GM10248 (cell line): ENCODE measurements at regions of chr2 and their contacts with region 1.

Region 1: DNA sequence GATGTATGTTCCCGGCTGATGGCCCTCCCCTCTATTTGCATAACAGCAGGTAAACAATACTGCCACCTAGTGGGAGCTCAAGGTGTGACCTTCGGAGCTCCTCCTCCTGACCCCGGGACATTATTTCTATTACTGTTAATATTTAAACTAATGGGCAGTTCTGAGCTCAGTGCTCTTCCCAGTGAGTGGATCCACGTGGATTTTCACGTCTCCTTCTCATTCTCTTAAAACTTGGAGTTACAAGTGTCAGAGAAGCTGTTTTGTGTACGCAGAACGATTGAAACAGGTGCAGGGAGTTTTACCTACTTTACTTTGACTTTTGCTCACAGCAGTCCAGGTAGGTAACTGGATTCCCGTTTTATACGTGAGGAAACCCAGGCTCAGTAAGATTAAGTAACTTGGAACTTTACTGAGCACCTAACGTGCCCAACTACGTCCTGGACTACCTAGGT is 127.3 kb downstream of the PRKCE start:
- DNase-seq: peak; percentile 67
- CTCF ChIP-seq: peak; percentile 38

Region 2: GRCh38 chr2:45643543-45644542 is 134.9 kb before region 1 on chr2:
- CTCF ChIA-PET with region 1: interaction called, 16 read pairs
- POLR2A ChIA-PET with region 1: no interaction called
- DNase-seq: peak; percentile 90
- CTCF ChIP-seq: peak; percentile 95

Region 3: GRCh38 chr2:45729753-45730512 is 48.8 kb before region 1 on chr2:
- CTCF ChIA-PET with region 1: interaction called, 24 read pairs
- POLR2A ChIA-PET with region 1: no interaction called
- DNase-seq: peak; percentile 47
- CTCF ChIP-seq: peak; percentile 52

Region 4: GRCh38 chr2:45743531-45744396 is 35.0 kb before region 1 on chr2:
- CTCF ChIA-PET with region 1: no interaction called
- POLR2A ChIA-PET with region 1: no interaction called
- DNase-seq: no peak
- CTCF ChIP-seq: no peak

Region 5: DNA sequence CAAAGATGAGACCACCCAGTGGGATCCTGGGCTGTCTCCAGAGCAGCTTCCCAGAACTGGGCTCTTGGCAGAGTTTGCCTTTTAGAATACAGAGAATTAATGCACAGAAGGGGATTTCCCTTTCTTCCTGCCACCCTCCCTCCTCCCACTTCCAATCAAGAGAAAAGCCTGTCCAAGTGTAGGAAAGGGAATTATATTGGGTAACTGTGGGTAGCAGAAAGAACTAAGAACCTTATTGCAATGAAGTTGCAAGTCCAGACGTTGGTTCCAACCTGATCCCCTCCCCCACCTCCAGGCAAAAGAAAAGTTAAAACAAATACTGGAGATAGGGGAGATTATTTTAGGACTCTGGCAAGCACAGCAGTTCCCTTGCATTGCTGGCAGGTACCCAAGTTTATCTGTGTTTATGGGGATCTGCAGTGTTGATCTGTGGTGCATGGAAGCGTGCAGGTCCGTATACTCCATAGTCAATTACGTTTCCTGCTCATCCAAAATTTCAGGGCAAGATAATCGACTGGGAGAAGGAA is 13.0 kb before region 1 on chr2:
- CTCF ChIA-PET with region 1: interaction called, 18 read pairs
- POLR2A ChIA-PET with region 1: no interaction called
- DNase-seq: no peak
- CTCF ChIP-seq: no peak

Region 6: DNA sequence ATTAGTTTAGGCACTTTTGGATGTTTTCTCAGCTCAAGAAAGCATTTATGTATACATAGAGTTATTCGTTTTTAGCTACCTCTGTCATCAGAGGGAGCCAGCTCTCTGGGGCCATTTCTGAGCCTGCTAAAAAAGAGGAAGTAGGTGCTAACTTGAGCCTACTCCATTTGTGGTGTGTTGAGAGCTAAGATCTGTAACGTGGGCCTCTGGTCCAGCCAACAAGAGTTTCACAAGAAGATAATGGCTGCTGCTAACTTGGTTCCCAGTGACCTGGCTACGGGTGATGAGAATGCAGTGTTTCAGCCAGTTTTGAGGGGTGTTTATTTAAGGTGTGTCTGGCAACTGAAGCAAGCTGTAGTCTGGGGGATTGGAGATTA is 55.2 kb after region 1 on chr2:
- CTCF ChIA-PET with region 1: interaction called, 17 read pairs
- POLR2A ChIA-PET with region 1: no interaction called
- DNase-seq: peak; percentile 71
- CTCF ChIP-seq: peak; percentile 21

Region 7: DNA sequence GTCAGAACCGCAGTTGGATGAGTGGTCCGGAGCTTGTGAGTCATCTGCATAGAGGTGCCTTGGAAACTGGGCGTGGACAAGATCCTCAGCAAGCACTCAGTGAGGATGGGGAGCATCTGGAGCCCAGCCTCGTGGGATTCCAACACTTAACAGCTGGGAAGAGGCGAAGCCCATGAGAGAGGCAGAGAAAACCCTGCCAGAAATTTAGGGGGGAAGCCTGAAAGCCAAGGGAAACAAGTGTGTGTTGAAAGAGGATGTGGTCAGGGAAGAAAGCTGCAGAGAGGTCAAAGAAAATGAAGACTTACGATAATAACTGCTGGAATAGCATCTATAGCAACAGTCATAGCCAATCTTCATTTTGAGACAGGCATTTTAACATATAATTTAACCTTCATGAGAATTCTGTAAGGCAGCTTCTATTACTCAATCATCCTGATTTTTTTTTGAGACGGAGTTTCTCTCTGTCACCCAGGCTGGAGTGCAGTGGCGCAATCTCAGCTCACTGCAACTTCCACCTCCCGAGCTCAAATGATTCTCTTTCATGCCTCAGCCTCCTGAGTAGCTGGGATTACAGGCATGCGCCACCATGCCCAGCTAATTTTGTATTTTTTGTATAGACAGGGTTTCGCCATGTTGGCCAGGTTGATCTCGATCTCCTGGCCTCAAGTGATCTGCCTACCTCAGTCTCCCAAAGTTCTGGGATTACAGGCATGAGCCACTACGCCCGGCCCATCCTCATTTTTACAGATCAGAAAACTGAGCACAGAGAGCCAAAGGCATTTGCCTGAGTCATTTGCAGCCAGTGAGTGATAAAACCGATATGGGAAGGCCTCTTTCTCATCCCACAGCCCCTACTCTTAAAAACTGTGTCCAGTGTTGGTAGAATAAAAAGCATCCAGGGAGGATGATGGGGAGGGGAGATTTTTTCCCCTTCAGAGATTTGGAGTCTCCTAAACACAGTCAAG is 304.1 kb after region 1 on chr2:
- CTCF ChIA-PET with region 1: no interaction called
- POLR2A ChIA-PET with region 1: no interaction called
- DNase-seq: no peak
- CTCF ChIP-seq: no peak